Thyroid gland (tissue), 4 donors: ENCODE measurements at regions of chr1 and their contacts with region 1.

Region 1: GRCh38 chr1:221263831-221264767 is 384.9 kb downstream of the HLX start:
- DNase-seq: peak; percentile 33 to 41
- H3K4me3 ChIP-seq: no peak overlapping the region
- H3K27ac ChIP-seq: no peak overlapping the region
- H3K4me1 ChIP-seq: no peaks in the 10 kb centered on the region
- H3K27me3 ChIP-seq: no peaks in the 10 kb centered on the region
- CTCF ChIP-seq: peak in 4 of 6 experiments; percentile 35 to 51 (median 38)
- POLR2A ChIP-seq: no peak

Region 2: GRCh38 chr1:220628431-220628830 is 635.7 kb before region 1 on chr1:
- intact Hi-C with region 1: no loop called
- DNase-seq: no peak
- H3K4me3 ChIP-seq: no peak overlapping the region
- H3K27ac ChIP-seq: no peak overlapping the region
- H3K4me1 ChIP-seq: no peaks in the 10 kb centered on the region
- H3K27me3 ChIP-seq: no peaks in the 10 kb centered on the region
- CTCF ChIP-seq: no peak
- POLR2A ChIP-seq: no peak

Region 3: GRCh38 chr1:221137666-221138065 is 126.4 kb before region 1 on chr1:
- intact Hi-C with region 1: no loop called
- DNase-seq: no peak
- H3K4me3 ChIP-seq: no peak overlapping the region
- H3K27ac ChIP-seq: no peak overlapping the region
- H3K4me1 ChIP-seq: no peaks in the 10 kb centered on the region
- H3K27me3 ChIP-seq: no peaks in the 10 kb centered on the region
- CTCF ChIP-seq: no peak
- POLR2A ChIP-seq: no peak

Region 4: DNA sequence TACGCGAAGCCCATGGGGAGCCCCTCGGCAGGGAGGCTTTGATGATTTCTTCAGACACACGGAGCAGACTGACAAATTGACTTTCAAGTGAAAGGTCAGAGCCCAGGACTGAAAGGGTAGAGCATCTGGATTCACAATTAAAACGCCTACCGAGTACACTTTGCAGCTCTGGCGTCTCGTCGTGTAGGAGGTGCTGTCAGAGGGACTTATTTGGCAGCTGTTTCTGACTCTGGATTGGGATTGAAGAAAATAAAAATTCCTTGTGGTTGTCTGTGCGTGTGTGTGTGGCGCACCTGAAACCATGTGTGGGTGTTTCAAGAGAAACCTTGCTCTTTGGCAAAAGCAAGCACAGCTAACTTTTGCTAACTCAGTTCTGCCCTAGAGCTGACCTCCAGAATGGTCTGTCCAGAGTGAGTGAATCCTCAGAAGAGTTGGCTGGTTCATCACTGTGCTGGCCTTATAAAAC is 36.2 kb before region 1 on chr1:
- intact Hi-C with region 1: no loop called
- DNase-seq: no peak
- H3K4me3 ChIP-seq: no peak overlapping the region
- H3K27ac ChIP-seq: no peak overlapping the region
- H3K4me1 ChIP-seq: no peaks in the 10 kb centered on the region
- H3K27me3 ChIP-seq: no peaks in the 10 kb centered on the region
- CTCF ChIP-seq: no peak
- POLR2A ChIP-seq: no peak

Region 5: DNA sequence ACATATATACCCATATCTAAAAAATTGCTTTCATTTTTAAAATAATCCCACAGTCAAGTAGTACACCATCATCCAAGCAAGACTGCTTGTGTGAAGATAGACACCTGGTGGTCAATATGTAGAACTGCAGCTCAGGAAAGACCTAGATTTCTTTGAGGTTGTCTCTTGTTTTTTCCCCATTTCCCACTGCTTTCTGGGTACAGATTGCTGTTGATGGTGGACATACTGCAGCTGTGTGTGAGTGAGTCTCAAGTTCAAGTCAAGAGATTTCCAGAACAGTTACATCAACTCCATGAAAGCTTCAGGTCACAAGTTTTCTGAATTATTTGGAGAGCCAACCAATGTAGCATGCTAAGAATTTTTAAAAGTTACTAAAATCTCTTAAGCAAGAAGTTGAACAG is 171.4 kb after region 1 on chr1:
- intact Hi-C with region 1: loop called (anchors 10 kb)
- DNase-seq: no peak
- H3K4me3 ChIP-seq: no peak overlapping the region
- H3K27ac ChIP-seq: no peak overlapping the region
- H3K4me1 ChIP-seq: peaks cover 6 to 7% of the 10 kb centered on the region in 2 donors
- H3K27me3 ChIP-seq: no peaks in the 10 kb centered on the region
- CTCF ChIP-seq: peak; percentile 81 to 92 (median 86)
- POLR2A ChIP-seq: no peak